Upper lobe of right lung (tissue), 1 donor: ENCODE measurements at regions of chr18 and their contacts with region 1.

Region 1: DNA sequence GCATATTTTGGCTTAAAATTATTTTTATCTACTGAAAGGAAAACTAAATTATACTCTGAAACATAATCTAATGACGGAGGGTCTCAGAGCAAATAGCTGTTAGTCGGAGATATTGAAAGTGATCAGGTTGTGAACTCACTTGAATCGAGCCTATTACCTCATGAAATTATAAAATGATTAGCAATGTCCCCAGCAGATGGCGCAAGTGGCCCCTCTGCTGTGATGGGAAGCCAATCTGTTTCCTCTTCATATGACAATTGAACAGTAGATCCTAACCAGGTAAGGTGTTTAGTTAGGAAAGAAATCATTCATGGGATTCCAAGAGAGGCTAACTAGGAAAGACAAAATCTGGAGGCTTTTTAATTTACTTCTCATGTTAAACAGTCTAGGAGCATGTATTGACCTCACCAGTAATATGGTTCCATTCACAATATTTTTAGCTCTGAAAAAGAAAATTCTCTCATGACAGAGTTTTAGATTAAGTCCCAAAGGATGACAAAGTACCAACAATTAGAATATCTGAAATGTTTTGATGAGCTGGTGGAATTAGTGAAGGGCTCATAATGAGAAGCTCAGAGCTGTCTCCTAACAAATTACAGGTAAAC is 29.9 kb upstream of the MPPE1 start:
- DNase-seq: peak; percentile 81
- ATAC-seq: peak; percentile 92
- H3K4me3 ChIP-seq: no peak overlapping the region
- H3K27ac ChIP-seq: no peak overlapping the region
- H3K4me1 ChIP-seq: no peaks in the 10 kb centered on the region
- H3K27me3 ChIP-seq: no peaks in the 10 kb centered on the region
- CTCF ChIP-seq: peak; percentile 81

Region 2: DNA sequence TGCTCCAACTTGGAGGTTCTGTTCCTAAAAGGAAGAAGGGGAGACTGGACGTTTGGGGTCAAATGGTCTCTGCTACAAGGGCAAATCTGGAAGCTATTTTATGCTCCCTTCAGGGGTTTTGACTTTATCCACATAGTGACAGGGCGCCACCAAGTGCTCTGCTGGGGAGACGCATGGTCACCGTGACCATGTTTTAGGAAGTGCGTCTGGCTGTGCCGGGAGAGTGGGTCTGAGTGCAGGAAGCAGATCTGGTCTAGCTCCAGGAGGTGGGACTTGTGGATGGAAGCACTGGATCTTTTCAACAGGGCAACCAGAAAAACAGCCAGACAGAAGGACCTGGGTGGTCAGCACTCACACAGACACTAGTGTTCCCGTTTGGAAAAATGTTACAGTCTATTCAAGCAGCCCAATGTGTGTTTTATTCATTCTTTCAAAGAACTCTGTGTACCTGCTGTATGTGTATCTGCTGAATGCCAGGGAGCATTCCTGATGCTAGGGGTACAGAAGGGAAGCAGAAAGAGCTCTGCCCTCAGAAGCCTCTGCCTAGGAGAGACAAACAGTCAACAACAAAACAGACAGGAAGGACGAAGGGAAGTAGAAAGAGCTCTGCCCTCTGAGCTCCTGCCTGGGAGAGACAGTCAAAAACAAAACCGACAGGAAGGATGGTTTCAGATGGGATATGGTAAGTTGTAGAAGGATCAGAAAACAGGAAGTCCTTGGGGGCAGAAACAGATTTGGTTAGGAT is 57.6 kb after region 1 on chr18:
- intact Hi-C with region 1: loop called (anchors 10 kb)
- DNase-seq: peak; percentile 87
- ATAC-seq: peak; percentile 93
- H3K4me3 ChIP-seq: no peak overlapping the region
- H3K27ac ChIP-seq: peak overlapping the region; percentile 55
- H3K4me1 ChIP-seq: peaks cover 14% of the 10 kb centered on the region
- H3K27me3 ChIP-seq: no peaks in the 10 kb centered on the region
- CTCF ChIP-seq: peak; percentile 87